ENCODE measurements at regions of chr1 and their contacts with region 1.

Region 1: DNA sequence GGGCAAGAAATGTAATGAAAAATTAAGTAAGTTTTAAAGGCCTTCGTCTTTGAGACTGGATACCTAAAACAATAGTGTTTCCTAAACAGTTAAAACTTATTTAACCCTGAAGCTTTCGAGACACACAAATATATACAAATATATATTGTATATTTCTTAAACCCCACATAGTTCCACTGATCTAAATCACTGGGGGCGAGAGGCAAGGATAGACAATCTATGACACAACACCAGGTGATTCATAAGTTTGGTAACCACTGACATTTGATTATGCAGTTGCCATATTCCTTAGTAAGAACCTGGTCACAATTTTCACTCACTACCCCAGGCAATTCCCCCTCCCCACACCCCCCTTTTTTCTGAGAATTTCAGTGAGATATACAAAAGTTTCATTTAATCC is 55.3 kb upstream of the BOLA1 start:
- DNase-seq: peak; percentile 66
- H3K4me3 ChIP-seq: peak overlapping the region; percentile 38 to 89 (median 82)
- H3K27ac ChIP-seq: peak overlapping the region; percentile 89
- H3K4me1 ChIP-seq: peaks cover 37% of the 10 kb centered on the region
- H3K27me3 ChIP-seq: no peaks in the 10 kb centered on the region
- CTCF ChIP-seq: no peak

Region 2: DNA sequence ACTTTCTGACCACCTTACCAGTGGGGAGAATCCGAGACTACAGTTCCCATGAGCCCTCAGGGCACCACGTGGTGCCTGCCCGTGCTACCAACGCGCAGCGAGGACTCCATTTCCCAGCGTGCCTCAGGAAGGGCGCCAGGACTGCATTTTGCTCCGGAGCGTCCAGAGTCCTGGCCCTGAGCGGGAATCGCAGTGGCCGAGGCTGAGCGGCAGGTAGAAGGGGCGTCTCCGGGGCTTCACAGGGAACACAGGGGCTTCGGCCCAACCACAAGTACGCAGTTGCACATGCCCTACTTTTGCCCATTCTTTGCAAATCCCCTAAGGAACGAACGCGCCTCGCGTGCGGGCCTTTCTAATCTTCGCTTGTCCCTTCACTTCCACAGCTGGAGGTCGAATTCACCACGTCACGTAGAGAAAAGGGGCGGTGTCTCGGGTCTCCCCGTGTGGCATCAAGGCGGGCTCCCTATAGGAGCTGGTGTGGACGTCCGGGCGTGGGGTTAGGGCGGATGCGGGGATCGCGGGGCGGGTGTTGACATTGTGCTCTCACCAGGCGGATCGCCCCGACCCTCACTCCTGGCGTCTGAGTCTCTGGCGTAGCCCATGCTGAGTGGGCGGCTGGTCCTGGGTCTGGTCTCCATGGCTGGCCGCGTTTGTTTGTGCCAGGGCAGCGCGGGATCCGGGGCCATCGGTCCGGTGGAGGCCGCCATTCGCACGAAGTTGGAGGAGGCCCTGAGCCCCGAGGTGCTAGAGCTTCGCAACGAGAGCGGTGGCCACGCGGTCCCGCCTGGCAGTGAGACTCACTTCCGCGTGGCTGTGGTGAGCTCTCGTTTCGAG is 55.6 kb after region 1 on chr1 and contains the start of gene BOLA1:
- CTCF ChIA-PET with region 1: no interaction called
- dilution Hi-C with region 1: no loop called
- in situ Hi-C with region 1: no loop called
- intact Hi-C with region 1: no loop called
- DNase-seq: peak; percentile 85
- H3K4me3 ChIP-seq: peak within 1 kb of the TSS; percentile 58 to 66 (median 62)
- H3K27ac ChIP-seq: peak within 1 kb of the TSS; percentile 42
- H3K4me1 ChIP-seq: peaks cover 6% of the 10 kb centered on the region
- H3K27me3 ChIP-seq: no peaks in the 10 kb centered on the region
- CTCF ChIP-seq: no peak
- total RNA-seq, gene BOLA1: 7.7 to 15.8 TPM

Region 3: GRCh38 chr1:149927503-149928387 is 83.6 kb after region 1 on chr1 and contains the start of gene SF3B4:
- CTCF ChIA-PET with region 1: no interaction called
- dilution Hi-C with region 1: no loop called
- in situ Hi-C with region 1: loop called in 1 of 2 experiments (anchors 25 kb)
- intact Hi-C with region 1: no loop called
- DNase-seq: peak; percentile 91
- H3K4me3 ChIP-seq: peak within 1 kb of the TSS; percentile 78 to 92 (median 92)
- H3K27ac ChIP-seq: peak within 1 kb of the TSS; percentile 88
- H3K4me1 ChIP-seq: peaks cover 32% of the 10 kb centered on the region
- H3K27me3 ChIP-seq: no peaks in the 10 kb centered on the region
- CTCF ChIP-seq: no peak
- total RNA-seq, gene SF3B4: 14.2 to 68.8 TPM

Region 4: GRCh38 chr1:149997585-149998262 is 153.6 kb after region 1 on chr1:
- CTCF ChIA-PET with region 1: no interaction called
- dilution Hi-C with region 1: no loop called
- in situ Hi-C with region 1: no loop called
- intact Hi-C with region 1: no loop called
- DNase-seq: no peak
- H3K4me3 ChIP-seq: no peak overlapping the region
- H3K27ac ChIP-seq: no peak overlapping the region
- H3K4me1 ChIP-seq: peaks cover 21% of the 10 kb centered on the region
- H3K27me3 ChIP-seq: no peaks in the 10 kb centered on the region
- CTCF ChIP-seq: no peak